GM12878 (cell line): ENCODE measurements at regions of chr6 and their contacts with region 1.

Region 1: GRCh38 chr6:47413752-47414422 is 63.7 kb upstream of the CD2AP start:
- DNase-seq: peak; percentile 60
- ATAC-seq: peak; percentile 91
- H3K4me3 ChIP-seq: peak overlapping the region; percentile 64
- H3K27ac ChIP-seq: peak overlapping the region; percentile 71
- H3K4me1 ChIP-seq: 0 out of 2 replicates have a peak, but pooled peaks cover 3% of the 10 kb centered on the region
- H3K27me3 ChIP-seq: no peaks in the 10 kb centered on the region
- CTCF ChIP-seq: peak; percentile 75 to 94 (median 89); a peak in 5 of 6 replicates
- EP300 ChIP-seq: no peak
- POLR2A ChIP-seq: no peak
- RAD21 ChIP-seq: peak; percentile 98

Region 2: DNA sequence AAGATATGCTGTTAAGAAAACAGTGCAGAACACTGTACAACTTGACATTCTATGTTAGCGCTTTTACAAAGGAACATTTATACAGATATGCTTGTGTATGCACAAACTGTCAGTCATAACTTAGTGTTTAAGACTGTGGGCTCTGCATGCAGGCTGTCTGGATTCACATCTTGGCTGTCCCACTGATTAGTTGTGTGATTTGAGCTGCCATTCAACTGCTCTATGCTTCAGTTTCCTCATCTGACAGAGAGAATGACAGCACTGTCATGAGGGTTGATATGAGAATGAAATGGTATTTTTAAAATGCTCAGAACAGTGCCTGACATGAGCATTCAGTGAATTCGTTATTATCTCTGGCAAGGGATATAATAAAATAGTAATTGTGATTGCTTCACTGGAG is 752.4 kb before region 1 on chr6:
- CTCF ChIA-PET with region 1: no interaction called
- POLR2A ChIA-PET with region 1: no interaction called
- RAD21 ChIA-PET with region 1: no interaction called
- SMC1A ChIA-PET with region 1: no interaction called
- in situ Hi-C with region 1: no loop called
- intact Hi-C with region 1: no loop called
- DNase-seq: no peak
- ATAC-seq: no peak
- H3K4me3 ChIP-seq: no peak overlapping the region
- H3K27ac ChIP-seq: no peak overlapping the region
- H3K4me1 ChIP-seq: no peaks in the 10 kb centered on the region
- H3K27me3 ChIP-seq: no peaks in the 10 kb centered on the region; a peak in 1 of 4 replicates
- CTCF ChIP-seq: no peak
- EP300 ChIP-seq: no peak
- POLR2A ChIP-seq: no peak
- RAD21 ChIP-seq: no peak

Region 3: DNA sequence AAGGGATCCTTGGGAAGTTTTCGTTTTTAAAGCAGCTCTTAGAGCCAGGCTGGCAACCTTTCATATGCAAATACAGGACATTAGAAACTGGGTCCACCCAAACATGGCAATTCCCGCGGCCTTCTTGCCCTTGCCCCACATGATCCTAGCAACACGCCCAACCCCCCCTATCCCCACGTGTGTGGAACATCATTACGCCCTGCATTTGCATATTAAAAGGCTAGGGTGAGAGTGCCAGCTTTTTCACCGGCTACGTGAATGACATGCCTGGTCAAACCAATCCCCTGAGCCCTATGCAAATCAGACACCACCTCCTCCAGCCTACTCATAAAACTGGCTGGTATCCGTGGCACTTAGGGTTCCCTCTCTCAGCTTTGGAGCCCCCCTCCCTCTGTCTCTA is 192.3 kb before region 1 on chr6:
- CTCF ChIA-PET with region 1: no interaction called
- POLR2A ChIA-PET with region 1: no interaction called
- RAD21 ChIA-PET with region 1: no interaction called
- SMC1A ChIA-PET with region 1: no interaction called
- in situ Hi-C with region 1: no loop called
- intact Hi-C with region 1: no loop called
- DNase-seq: no peak
- ATAC-seq: no peak
- H3K4me3 ChIP-seq: no peak overlapping the region
- H3K27ac ChIP-seq: no peak overlapping the region
- H3K4me1 ChIP-seq: no peaks in the 10 kb centered on the region
- H3K27me3 ChIP-seq: no peaks in the 10 kb centered on the region
- CTCF ChIP-seq: no peak
- EP300 ChIP-seq: no peak
- POLR2A ChIP-seq: no peak
- RAD21 ChIP-seq: no peak

Region 4: DNA sequence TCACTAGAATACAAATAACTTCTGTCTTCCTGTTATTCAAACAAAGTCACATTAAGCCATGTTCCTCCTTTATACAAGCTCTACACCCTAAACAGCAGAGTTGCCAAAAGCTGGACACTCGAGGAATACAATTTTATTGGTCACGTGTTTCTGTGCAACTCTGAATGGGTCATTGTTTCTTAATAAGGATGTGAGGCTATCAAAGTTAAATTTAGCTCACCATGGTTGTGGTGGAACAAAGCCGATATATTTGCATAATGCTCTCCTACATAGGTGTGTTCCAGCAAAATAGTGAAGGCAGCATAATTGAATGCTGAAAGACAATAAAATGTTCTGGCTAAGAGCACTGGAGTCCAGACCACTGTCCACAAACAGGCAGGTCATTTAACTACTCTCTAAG is 26.8 kb after region 1 on chr6:
- CTCF ChIA-PET with region 1: interaction called, 4 read pairs
- POLR2A ChIA-PET with region 1: no interaction called
- RAD21 ChIA-PET with region 1: interaction called, 5 read pairs
- SMC1A ChIA-PET with region 1: interaction called, 5 read pairs
- in situ Hi-C with region 1: no loop called
- intact Hi-C with region 1: loop called (anchors 2 kb)
- DNase-seq: peak; percentile 47
- ATAC-seq: peak; percentile 76
- H3K4me3 ChIP-seq: no peak overlapping the region; the same call in 1 of the 2 replicates
- H3K27ac ChIP-seq: 0 out of 2 replicates have a peak overlapping the region, but pooled peaks have one; percentile 32
- H3K4me1 ChIP-seq: peaks cover 36% of the 10 kb centered on the region
- H3K27me3 ChIP-seq: no peaks in the 10 kb centered on the region
- CTCF ChIP-seq: no peak
- EP300 ChIP-seq: no peak; a peak in 1 of 4 replicates
- POLR2A ChIP-seq: no peak
- RAD21 ChIP-seq: no peak

Region 5: DNA sequence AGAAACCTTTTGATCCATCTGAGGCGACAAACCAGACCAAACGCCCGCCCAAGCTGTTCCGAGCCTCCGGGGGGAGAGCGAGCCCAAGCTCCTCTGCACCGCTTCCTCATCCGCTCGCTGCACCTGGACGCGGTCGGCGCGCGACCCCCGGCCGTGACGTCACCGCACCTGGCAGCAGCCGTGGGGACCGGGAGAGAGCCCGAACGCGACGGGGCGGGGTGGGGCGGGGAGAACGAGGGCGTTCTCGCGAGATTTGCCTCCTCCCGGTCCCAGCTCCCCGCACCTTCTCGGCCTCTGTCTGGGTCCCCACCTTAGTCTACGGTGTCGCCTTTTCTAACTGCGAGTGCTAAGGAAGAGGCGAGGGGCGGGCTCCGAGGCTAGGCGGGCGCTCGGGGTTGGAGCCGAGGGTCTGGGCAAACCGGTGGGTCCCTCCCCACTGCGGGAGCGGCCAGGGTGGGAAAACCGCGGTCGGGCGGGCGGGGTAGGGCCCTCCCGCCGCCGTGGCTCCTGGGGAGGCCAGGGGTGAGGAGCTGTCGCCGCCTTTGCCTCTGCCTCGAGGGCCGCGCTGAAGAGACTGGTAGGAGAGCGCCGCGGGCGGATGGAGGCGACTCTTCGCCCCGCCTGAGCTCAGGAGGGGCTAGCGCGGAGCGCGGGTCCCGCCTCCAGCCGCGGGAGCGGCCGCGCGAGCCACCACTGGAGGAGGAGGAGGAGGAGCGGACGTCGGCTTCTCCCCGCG is 63.8 kb after region 1 on chr6 and contains the start of gene CD2AP:
- CTCF ChIA-PET with region 1: interaction called, 14 read pairs
- POLR2A ChIA-PET with region 1: interaction called, 11 read pairs
- RAD21 ChIA-PET with region 1: interaction called, 58 read pairs
- SMC1A ChIA-PET with region 1: interaction called, 47 read pairs
- in situ Hi-C with region 1: no loop called
- intact Hi-C with region 1: loop called (anchors 1 kb)
- DNase-seq: peak; percentile 65
- ATAC-seq: peak; percentile 85
- H3K4me3 ChIP-seq: peak within 1 kb of the TSS; percentile 98
- H3K27ac ChIP-seq: peak within 1 kb of the TSS; percentile 92
- H3K4me1 ChIP-seq: no peaks in the 10 kb centered on the region; the same call in 1 of the 2 replicates
- H3K27me3 ChIP-seq: no peaks in the 10 kb centered on the region
- CTCF ChIP-seq: peak; percentile 14 to 29 (median 25); a peak in 4 of 6 replicates
- EP300 ChIP-seq: 0 out of 4 replicates have a peak, but pooled peaks of 1 of the 2 experiments have one; percentile 17
- POLR2A ChIP-seq: peak; percentile 91
- RAD21 ChIP-seq: peak; percentile 24; the same call in 1 of the 2 replicates
- polyA plus RNA-seq, gene CD2AP: 5.4 to 8.0 TPM

Region 6: DNA sequence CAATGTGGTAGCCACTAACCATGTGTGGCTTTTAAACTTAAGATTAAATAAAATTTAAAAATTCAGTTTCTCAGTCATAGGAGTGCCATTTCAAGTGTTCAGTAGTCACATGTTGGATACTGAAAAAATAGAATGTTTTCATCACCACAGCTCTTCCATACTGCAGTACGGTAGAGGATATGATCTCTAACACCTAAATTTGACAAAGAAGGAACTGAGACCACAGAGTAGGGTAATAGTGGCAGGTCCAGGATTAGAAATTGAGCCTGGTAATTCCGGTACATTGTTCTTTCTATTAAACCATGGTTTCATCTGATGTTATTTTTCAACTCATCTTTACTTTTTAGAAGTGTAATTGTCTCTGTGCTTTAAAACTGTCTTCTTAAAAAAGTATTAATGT is 167.7 kb after region 1 on chr6:
- CTCF ChIA-PET with region 1: interaction called, 8 read pairs
- POLR2A ChIA-PET with region 1: no interaction called
- RAD21 ChIA-PET with region 1: interaction called, 5 read pairs
- SMC1A ChIA-PET with region 1: interaction called, 5 read pairs
- in situ Hi-C with region 1: no loop called
- intact Hi-C with region 1: loop called (anchors 5 kb)
- DNase-seq: no peak
- ATAC-seq: peak; percentile 83
- H3K4me3 ChIP-seq: no peak overlapping the region
- H3K27ac ChIP-seq: no peak overlapping the region
- H3K4me1 ChIP-seq: no peaks in the 10 kb centered on the region
- H3K27me3 ChIP-seq: no peaks in the 10 kb centered on the region
- CTCF ChIP-seq: no peak
- EP300 ChIP-seq: no peak
- POLR2A ChIP-seq: no peak
- RAD21 ChIP-seq: no peak

Region 7: GRCh38 chr6:47603995-47604394 is 190.1 kb after region 1 on chr6:
- CTCF ChIA-PET with region 1: interaction called, 7 read pairs
- POLR2A ChIA-PET with region 1: no interaction called
- RAD21 ChIA-PET with region 1: interaction called, 11 read pairs
- SMC1A ChIA-PET with region 1: interaction called, 8 read pairs
- in situ Hi-C with region 1: no loop called
- intact Hi-C with region 1: loop called (anchors 5 kb)
- DNase-seq: no peak
- ATAC-seq: no peak
- H3K4me3 ChIP-seq: no peak overlapping the region
- H3K27ac ChIP-seq: no peak overlapping the region
- H3K4me1 ChIP-seq: no peaks in the 10 kb centered on the region
- H3K27me3 ChIP-seq: no peaks in the 10 kb centered on the region
- CTCF ChIP-seq: no peak
- EP300 ChIP-seq: no peak
- POLR2A ChIP-seq: no peak
- RAD21 ChIP-seq: no peak

Region 8: DNA sequence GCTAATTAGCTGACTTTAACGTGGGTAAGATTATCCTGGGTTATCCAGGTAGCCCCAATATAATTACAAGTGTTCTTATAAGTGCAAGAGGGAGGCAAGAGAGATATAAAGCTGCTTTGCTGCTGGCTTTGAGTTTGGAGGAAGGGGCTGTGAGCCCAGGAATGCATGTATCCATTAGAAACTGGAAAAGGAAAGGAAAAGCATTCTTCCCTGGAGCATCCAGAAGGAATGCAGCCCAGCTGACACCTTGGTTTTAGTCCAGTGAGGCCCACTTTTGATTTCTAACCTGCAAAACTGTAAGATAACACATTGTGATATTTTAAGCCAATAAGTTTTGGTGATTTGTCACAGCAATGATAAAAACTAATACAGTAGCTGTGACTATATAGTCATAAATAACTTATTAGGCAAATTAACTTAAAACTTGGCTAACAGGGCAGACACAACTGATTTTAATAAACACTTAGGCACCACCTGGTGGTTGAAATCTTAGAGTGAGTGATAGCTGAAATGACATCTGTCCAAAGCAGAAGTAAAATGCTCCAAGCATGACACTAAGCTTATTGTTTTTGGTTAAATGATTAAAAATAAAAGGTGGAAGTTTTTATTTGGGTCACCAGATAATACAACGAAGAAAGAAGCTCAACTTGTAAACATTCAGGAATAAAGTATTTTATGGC is 320.1 kb after region 1 on chr6:
- CTCF ChIA-PET with region 1: interaction called, 57 read pairs
- POLR2A ChIA-PET with region 1: no interaction called
- RAD21 ChIA-PET with region 1: interaction called, 18 read pairs
- SMC1A ChIA-PET with region 1: interaction called, 49 read pairs
- in situ Hi-C with region 1: no loop called
- intact Hi-C with region 1: loop called (anchors 1 kb)
- DNase-seq: peak; percentile 7
- ATAC-seq: peak; percentile 85
- H3K4me3 ChIP-seq: no peak overlapping the region
- H3K27ac ChIP-seq: no peak overlapping the region
- H3K4me1 ChIP-seq: no peaks in the 10 kb centered on the region
- H3K27me3 ChIP-seq: no peaks in the 10 kb centered on the region
- CTCF ChIP-seq: peak; percentile 33 to 64 (median 51); a peak in 5 of 6 replicates
- EP300 ChIP-seq: no peak
- POLR2A ChIP-seq: no peak
- RAD21 ChIP-seq: peak; percentile 83

Region 9: DNA sequence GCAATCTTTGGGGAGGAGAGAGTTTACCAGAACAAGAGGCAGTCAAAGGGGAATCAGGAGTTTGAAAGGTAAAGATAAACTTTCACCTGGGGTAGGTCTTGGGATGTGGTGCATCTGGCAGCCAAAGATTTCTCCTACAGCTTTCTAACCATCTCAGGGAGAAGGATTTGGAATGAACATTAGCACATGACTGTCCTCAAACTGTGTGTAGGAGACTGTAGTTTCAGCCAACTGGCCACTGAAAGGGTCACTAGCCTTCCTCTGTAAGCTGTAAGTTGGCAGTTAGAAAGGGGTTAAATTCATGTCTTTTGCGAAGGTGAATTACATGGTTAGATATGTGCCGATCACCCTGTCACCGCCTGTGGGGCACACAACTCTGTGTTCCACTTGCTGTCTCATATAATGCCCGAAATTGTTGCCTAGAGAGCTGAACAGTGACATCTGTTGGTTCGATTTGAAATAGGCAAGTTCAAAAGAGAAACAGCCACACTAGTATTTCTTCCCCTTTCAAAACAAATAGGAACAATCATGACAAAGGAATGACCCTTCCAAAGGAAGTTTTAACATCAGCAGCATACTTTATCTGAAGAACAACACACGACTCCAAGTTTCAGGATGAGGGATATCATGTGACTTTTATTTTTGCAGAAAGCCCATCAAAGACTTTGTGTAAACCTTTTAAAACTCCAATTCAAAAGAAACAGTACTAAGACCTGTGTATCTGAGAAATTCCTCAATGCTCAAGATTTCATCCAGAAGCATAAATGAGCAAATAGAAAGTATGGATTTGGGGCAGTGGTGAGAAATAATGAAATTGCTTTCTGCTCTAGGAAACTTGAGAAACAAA is 366.8 kb after region 1 on chr6:
- CTCF ChIA-PET with region 1: interaction called, 23 read pairs
- POLR2A ChIA-PET with region 1: no interaction called
- RAD21 ChIA-PET with region 1: interaction called, 4 read pairs
- SMC1A ChIA-PET with region 1: interaction called, 18 read pairs
- in situ Hi-C with region 1: loop called (anchors 10 kb)
- intact Hi-C with region 1: loop called (anchors 1 kb)
- DNase-seq: no peak
- ATAC-seq: peak; percentile 96
- H3K4me3 ChIP-seq: no peak overlapping the region
- H3K27ac ChIP-seq: no peak overlapping the region
- H3K4me1 ChIP-seq: no peaks in the 10 kb centered on the region
- H3K27me3 ChIP-seq: peaks cover 0 to 2% of the 10 kb centered on the region in 2 experiments; a peak in 2 of 4 replicates
- CTCF ChIP-seq: peak; percentile 60 to 65 (median 61)
- EP300 ChIP-seq: no peak
- POLR2A ChIP-seq: no peak
- RAD21 ChIP-seq: peak; percentile 86

Region 10: GRCh38 chr6:47977314-47977713 is 563.4 kb after region 1 on chr6:
- CTCF ChIA-PET with region 1: no interaction called
- POLR2A ChIA-PET with region 1: no interaction called
- RAD21 ChIA-PET with region 1: no interaction called
- SMC1A ChIA-PET with region 1: no interaction called
- in situ Hi-C with region 1: no loop called
- intact Hi-C with region 1: no loop called
- DNase-seq: no peak
- ATAC-seq: no peak
- H3K4me3 ChIP-seq: no peak overlapping the region
- H3K27ac ChIP-seq: no peak overlapping the region
- H3K4me1 ChIP-seq: no peaks in the 10 kb centered on the region
- H3K27me3 ChIP-seq: no peaks in the 10 kb centered on the region
- CTCF ChIP-seq: no peak
- EP300 ChIP-seq: no peak
- POLR2A ChIP-seq: no peak
- RAD21 ChIP-seq: no peak

Region 11: DNA sequence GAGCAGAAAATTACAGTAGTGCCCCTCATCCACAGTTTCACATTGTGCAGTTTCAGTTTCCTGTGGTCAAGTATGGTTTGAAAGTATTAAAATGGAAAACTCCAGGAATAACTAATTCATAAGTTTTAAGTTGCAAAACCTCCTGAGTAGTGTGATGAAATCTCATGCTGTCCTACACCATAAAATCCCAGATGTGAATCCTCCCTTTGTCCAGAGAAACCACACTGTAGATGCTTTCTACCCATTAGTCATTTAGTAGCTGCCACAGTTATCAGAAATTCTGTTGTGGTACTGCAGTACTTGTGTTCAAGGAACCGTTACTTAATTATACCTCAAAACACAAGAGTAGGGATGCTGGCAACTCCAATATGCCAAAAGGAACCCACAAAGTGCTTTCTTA is 622.4 kb after region 1 on chr6:
- CTCF ChIA-PET with region 1: no interaction called
- POLR2A ChIA-PET with region 1: no interaction called
- RAD21 ChIA-PET with region 1: no interaction called
- SMC1A ChIA-PET with region 1: no interaction called
- in situ Hi-C with region 1: no loop called
- intact Hi-C with region 1: no loop called
- DNase-seq: no peak
- ATAC-seq: no peak; the same call in 2 of the 3 replicates
- H3K4me3 ChIP-seq: no peak overlapping the region
- H3K27ac ChIP-seq: no peak overlapping the region
- H3K4me1 ChIP-seq: no peaks in the 10 kb centered on the region
- H3K27me3 ChIP-seq: no peaks in the 10 kb centered on the region
- CTCF ChIP-seq: no peak
- EP300 ChIP-seq: no peak
- POLR2A ChIP-seq: no peak
- RAD21 ChIP-seq: no peak